ENCODE measurements at regions of chr6 and their contacts with region 1.

Region 1: DNA sequence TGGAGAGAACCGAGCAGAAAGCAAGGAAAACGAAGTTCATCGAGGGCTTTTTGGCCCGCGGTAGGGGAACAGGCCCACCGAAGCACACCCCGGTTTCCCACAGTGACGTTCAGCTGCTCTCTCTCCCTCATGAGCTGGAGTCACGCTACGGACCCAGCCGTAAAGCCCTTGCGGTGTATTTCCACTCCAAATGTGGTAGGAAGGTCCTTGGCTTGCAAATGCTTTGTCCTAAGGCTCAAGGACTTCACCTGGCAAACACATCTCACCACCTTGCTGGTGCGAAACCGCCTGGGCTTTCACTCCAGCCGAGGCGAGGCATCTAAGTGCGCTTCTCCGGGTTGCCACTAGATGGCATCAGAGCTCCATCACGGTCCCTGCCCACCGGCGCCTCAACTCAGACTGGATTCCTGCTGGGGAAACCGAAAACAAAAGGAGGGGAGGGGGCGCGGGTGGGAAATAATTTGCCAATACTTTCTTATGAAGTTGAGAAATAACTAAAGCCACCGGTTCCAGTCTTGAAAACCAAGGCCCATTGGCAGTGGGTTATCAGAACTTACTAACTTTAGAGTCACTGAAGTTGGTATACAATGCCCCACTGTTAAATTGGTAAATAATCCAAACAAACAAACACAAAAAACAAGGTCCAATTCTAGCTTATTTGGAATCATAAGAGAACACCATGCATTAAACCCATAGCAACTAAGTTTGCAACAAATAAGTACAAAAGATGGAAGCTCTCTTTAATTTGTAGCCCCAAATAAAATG is 13.4 kb upstream of the FOXC1 start:
- DNase-seq: peak; percentile 60
- ATAC-seq: peak; percentile 89

Region 2: GRCh38 chr6:2353412-2354137 is 757.3 kb after region 1 on chr6:
- intact Hi-C with region 1: loop called (anchors 5 kb)
- DNase-seq: peak; percentile 57
- ATAC-seq: peak; percentile 70

Region 3: GRCh38 chr6:2634139-2634964 is 1038.1 kb after region 1 on chr6:
- intact Hi-C with region 1: loop called (anchors 10 kb)
- DNase-seq: peak; percentile 92
- ATAC-seq: peak; percentile 93

Measured in left ventricle myocardium superior (tissue), 1 donor.